Naive thymus-derived CD8-positive, alpha-beta T cell (primary cell): ENCODE measurements at regions of chr16 and their contacts with region 1.

Region 1: GRCh38 chr16:2513405-2514322 is at the start of gene ATP6V0C:
- DNase-seq: peak; percentile 86 to 99 (median 92)
- ATAC-seq: peak; percentile 86
- H3K4me3 Mint-ChIP-seq: peak within 1 kb of the TSS; percentile 87 to 96 (median 91)
- H3K27ac Mint-ChIP-seq: peak within 1 kb of the TSS; percentile 91 to 99 (median 97)
- H3K4me1 Mint-ChIP-seq: peaks cover 35 to 71% (median 54%) of the 10 kb centered on the region in 4 donors
- H3K27me3 Mint-ChIP-seq: no peaks in the 10 kb centered on the region
- polyA plus RNA-seq, gene ATP6V0C: 74.9 to 84.9 (median 77.6) TPM

Region 2: GRCh38 chr16:2500918-2501750 is 12.5 kb before region 1 on chr16:
- POLR2A ChIA-PET with region 1: interaction called, 13 read pairs
- DNase-seq: peak; percentile 65 to 86 (median 80)
- ATAC-seq: peak; percentile 97 to 99
- H3K4me3 Mint-ChIP-seq: no peak overlapping the region
- H3K27ac Mint-ChIP-seq: no peak overlapping the region
- H3K4me1 Mint-ChIP-seq: peaks cover 0 to 2% (median under 1%) of the 10 kb centered on the region in 4 donors
- H3K27me3 Mint-ChIP-seq: no peaks in the 10 kb centered on the region

Region 3: DNA sequence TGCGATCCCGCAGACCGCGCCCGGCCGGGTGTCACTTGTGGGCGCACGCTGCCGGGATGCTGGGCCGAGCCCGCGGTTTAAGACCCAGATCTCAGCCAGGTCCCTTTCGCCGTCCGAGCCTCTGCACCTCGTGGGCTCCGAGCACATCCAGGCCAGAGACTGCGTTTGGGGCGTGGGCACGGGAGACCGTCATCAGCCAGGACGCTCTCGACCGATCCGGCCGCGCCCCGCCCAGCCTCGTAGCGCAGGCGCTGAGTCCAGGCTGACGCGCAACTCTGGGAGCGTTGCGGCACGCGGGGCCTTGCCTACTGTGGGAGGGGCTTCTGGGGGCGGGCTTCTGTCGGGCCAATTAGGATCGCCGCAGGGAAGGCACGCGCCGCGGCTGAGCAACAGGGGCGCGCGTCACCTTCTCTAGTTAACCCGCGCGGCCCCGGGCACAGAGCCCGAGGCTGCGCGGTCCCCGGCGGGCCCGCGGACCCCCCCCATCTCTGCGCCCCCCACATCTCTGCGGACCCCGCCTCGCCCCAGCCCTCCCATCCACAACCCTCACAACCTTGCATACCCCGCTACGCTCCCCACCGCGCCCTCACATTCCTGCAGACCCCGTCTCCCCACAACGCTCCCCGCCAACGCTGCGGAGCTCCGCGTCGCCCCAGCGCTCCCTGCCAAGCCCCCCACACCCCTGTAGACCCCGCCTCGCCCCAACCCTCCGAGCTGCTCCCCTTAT is 18.3 kb after region 1 on chr16:
- POLR2A ChIA-PET with region 1: interaction called, 146 read pairs
- DNase-seq: peak; percentile 89 to 98 (median 96)
- ATAC-seq: peak; percentile 85 to 89
- H3K4me3 Mint-ChIP-seq: peak overlapping the region; percentile 92 to 100 (median 96)
- H3K27ac Mint-ChIP-seq: peak overlapping the region; percentile 92 to 100 (median 99)
- H3K4me1 Mint-ChIP-seq: peaks cover 9 to 34% (median 23%) of the 10 kb centered on the region in 4 donors
- H3K27me3 Mint-ChIP-seq: peaks cover 0 to 3% (median 0%) of the 10 kb centered on the region in 5 donors